Mammary epithelial cell (primary cell): ENCODE measurements at regions of chr2 and their contacts with region 1.

Region 1: GRCh38 chr2:162153608-162154224 is 1.7 kb upstream of the GCG start:
- DNase-seq: peak; percentile 58
- H3K4me3 ChIP-seq: no peak overlapping the region
- H3K27ac ChIP-seq: no peak overlapping the region
- H3K4me1 ChIP-seq: no peaks in the 10 kb centered on the region
- H3K27me3 ChIP-seq: no peaks in the 10 kb centered on the region
- CTCF ChIP-seq: peak; percentile 80 to 87

Region 2: GRCh38 chr2:161414042-161415033 is 739.4 kb before region 1 on chr2:
- CTCF ChIA-PET with region 1: no interaction called
- dilution Hi-C with region 1: no loop called
- in situ Hi-C with region 1: no loop called
- intact Hi-C with region 1: no loop called
- DNase-seq: peak; percentile 17
- H3K4me3 ChIP-seq: peak overlapping the region; percentile 26 to 52 (median 49)
- H3K27ac ChIP-seq: no peak overlapping the region
- H3K4me1 ChIP-seq: peaks cover 21% of the 10 kb centered on the region
- H3K27me3 ChIP-seq: peaks cover 43% of the 10 kb centered on the region
- CTCF ChIP-seq: no peak

Region 3: DNA sequence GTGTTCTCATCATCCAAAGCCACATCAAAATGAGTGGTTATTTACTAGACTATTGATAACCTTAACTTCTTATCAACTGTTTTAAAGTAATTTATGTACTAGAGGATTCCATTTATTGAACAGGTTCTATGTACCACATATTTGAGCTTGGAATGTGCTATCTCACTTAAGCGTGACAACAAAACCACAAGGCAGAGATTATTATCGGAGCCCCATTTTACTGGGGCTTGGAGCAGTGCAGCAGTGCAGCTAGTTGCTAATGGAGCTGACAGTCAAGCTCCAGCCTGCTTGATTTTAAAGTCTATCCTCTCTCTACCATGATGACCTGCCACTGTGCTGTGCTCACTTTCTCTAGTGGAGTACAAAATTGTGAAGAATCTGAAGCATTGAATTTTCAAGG is 26.3 kb before region 1 on chr2:
- CTCF ChIA-PET with region 1: no interaction called
- dilution Hi-C with region 1: no loop called
- in situ Hi-C with region 1: no loop called
- intact Hi-C with region 1: no loop called
- DNase-seq: no peak
- H3K4me3 ChIP-seq: no peak overlapping the region
- H3K27ac ChIP-seq: no peak overlapping the region
- H3K4me1 ChIP-seq: no peaks in the 10 kb centered on the region
- H3K27me3 ChIP-seq: no peaks in the 10 kb centered on the region
- CTCF ChIP-seq: no peak

Region 4: GRCh38 chr2:162221064-162221463 is 67.3 kb after region 1 on chr2:
- CTCF ChIA-PET with region 1: no interaction called
- dilution Hi-C with region 1: no loop called
- in situ Hi-C with region 1: no loop called
- intact Hi-C with region 1: loop called (anchors 1 kb)
- DNase-seq: peak; percentile 37
- H3K4me3 ChIP-seq: no peak overlapping the region
- H3K27ac ChIP-seq: no peak overlapping the region
- H3K4me1 ChIP-seq: no peaks in the 10 kb centered on the region
- H3K27me3 ChIP-seq: no peaks in the 10 kb centered on the region
- CTCF ChIP-seq: peak; percentile 96 to 99

Region 5: DNA sequence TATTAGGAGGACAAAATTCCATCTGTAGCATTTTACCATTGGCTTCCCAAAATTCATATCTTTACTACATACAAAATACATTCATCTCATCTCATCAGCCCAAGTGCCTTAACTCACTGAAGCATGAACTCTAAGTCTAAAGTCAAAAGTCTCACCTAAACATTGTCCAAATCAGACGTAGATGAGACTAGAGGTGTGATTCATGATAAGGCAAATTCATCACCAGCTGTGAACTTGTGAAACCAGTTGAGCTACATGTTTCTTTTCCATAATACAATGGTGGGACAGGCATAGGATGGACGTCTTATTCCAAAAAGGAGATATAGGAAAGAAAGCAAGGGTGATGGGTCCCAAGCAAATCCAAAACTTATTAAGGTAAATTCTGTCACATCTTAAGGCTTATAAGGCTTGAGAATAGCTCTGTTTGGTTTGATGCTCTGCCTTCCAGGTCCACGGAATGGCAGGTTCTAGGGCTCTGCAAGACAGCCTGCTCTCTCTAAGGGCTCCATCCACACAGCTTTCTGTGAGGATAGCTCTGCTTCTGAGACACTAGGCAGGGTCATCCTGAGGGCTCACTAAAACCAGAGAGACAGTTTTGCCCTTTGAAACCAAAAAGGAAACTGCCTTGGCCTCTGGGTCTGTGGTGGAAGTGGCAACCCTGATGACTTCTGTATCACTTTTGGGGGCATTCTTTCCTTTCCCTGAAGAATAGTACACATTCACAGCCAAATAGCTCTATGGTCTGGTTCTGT is 155.2 kb after region 1 on chr2:
- CTCF ChIA-PET with region 1: no interaction called
- dilution Hi-C with region 1: no loop called
- in situ Hi-C with region 1: loop called in 1 of 2 experiments (anchors 5 kb)
- intact Hi-C with region 1: no loop called
- DNase-seq: peak; percentile 66
- H3K4me3 ChIP-seq: no peak overlapping the region
- H3K27ac ChIP-seq: no peak overlapping the region
- H3K4me1 ChIP-seq: no peaks in the 10 kb centered on the region
- H3K27me3 ChIP-seq: no peaks in the 10 kb centered on the region
- CTCF ChIP-seq: no peak